B cell (primary cell): ENCODE measurements at regions of chr19 and their contacts with region 1.

Region 1: GRCh38 chr19:9796113-9796773 is 22.6 kb downstream of the FBXL12 start:
- DNase-seq: peak; percentile 92
- ATAC-seq: peak; percentile 18
- H3K4me3 ChIP-seq: no peak overlapping the region
- H3K4me3 Mint-ChIP-seq: peak overlapping the region; percentile 23
- H3K27ac ChIP-seq: peak overlapping the region; percentile 52 to 72
- H3K27ac Mint-ChIP-seq: peak overlapping the region; percentile 79
- H3K4me1 ChIP-seq: peaks cover 0 to 19% of the 10 kb centered on the region in 2 donors
- H3K4me1 Mint-ChIP-seq: peaks cover 12% of the 10 kb centered on the region
- H3K27me3 ChIP-seq: no peaks in the 10 kb centered on the region
- H3K27me3 Mint-ChIP-seq: no peaks in the 10 kb centered on the region
- CTCF ChIP-seq: peak; percentile 79

Region 2: GRCh38 chr19:9140159-9140874 is 655.9 kb before region 1 on chr19 and contains the start of gene ZNF317:
- CTCF ChIA-PET with region 1: interaction called, 4 read pairs
- POLR2A ChIA-PET with region 1: no interaction called
- intact Hi-C with region 1: loop called (anchors 1 kb)
- DNase-seq: peak; percentile 94
- ATAC-seq: peak; percentile 90
- H3K4me3 ChIP-seq: peak within 1 kb of the TSS; percentile 70 to 99 (median 97)
- H3K4me3 Mint-ChIP-seq: peak within 1 kb of the TSS; percentile 98
- H3K27ac ChIP-seq: peak within 1 kb of the TSS; percentile 86 to 90
- H3K27ac Mint-ChIP-seq: peak within 1 kb of the TSS; percentile 97
- H3K4me1 ChIP-seq: peaks cover 13 to 15% of the 10 kb centered on the region in 2 donors
- H3K4me1 Mint-ChIP-seq: peaks cover 33% of the 10 kb centered on the region
- H3K27me3 ChIP-seq: no peaks in the 10 kb centered on the region
- H3K27me3 Mint-ChIP-seq: peaks cover 2% of the 10 kb centered on the region
- CTCF ChIP-seq: no peak
- total RNA-seq, gene ZNF317: 60.6 and 65.2 TPM in 2 replicates

Region 3: GRCh38 chr19:9323919-9324583 is 472.2 kb before region 1 on chr19 and contains the start of gene ZNF559:
- CTCF ChIA-PET with region 1: no interaction called
- POLR2A ChIA-PET with region 1: no interaction called
- intact Hi-C with region 1: loop called (anchors 1 kb)
- DNase-seq: peak; percentile 98
- ATAC-seq: peak; percentile 89
- H3K4me3 ChIP-seq: peak within 1 kb of the TSS; percentile 72 to 88 (median 79)
- H3K4me3 Mint-ChIP-seq: peak within 1 kb of the TSS; percentile 96
- H3K27ac ChIP-seq: peak within 1 kb of the TSS; percentile 78 to 81
- H3K27ac Mint-ChIP-seq: peak within 1 kb of the TSS; percentile 96
- H3K4me1 ChIP-seq: peaks cover 11 to 17% of the 10 kb centered on the region in 2 donors
- H3K4me1 Mint-ChIP-seq: peaks cover 24% of the 10 kb centered on the region
- H3K27me3 ChIP-seq: no peaks in the 10 kb centered on the region
- H3K27me3 Mint-ChIP-seq: no peaks in the 10 kb centered on the region
- CTCF ChIP-seq: peak; percentile 59
- total RNA-seq, gene ZNF559: 49.3 and 60.9 TPM in 2 replicates

Region 4: GRCh38 chr19:9584073-9584833 is 212.0 kb before region 1 on chr19 and contains the start of gene ZNF121:
- CTCF ChIA-PET with region 1: interaction called, 11 read pairs
- POLR2A ChIA-PET with region 1: interaction called, 4 read pairs
- intact Hi-C with region 1: loop called (anchors 1 kb)
- DNase-seq: peak; percentile 90
- ATAC-seq: peak; percentile 84
- H3K4me3 ChIP-seq: peak within 1 kb of the TSS; percentile 77 to 100 (median 92)
- H3K4me3 Mint-ChIP-seq: peak within 1 kb of the TSS; percentile 94
- H3K27ac ChIP-seq: peak within 1 kb of the TSS; percentile 90 to 96
- H3K27ac Mint-ChIP-seq: peak within 1 kb of the TSS; percentile 95
- H3K4me1 ChIP-seq: peaks cover 0 to 27% of the 10 kb centered on the region in 2 donors
- H3K4me1 Mint-ChIP-seq: peaks cover 31% of the 10 kb centered on the region
- H3K27me3 ChIP-seq: peaks cover 0 to under 1% (median 0%) of the 10 kb centered on the region in 4 experiments
- H3K27me3 Mint-ChIP-seq: peaks cover 4% of the 10 kb centered on the region
- CTCF ChIP-seq: no peak
- total RNA-seq, gene ZNF121: 48.0 and 53.5 TPM in 2 replicates

Region 5: GRCh38 chr19:9674663-9675357 is 121.4 kb before region 1 on chr19 and contains the start of gene ZNF562:
- CTCF ChIA-PET with region 1: interaction called, 3 read pairs
- POLR2A ChIA-PET with region 1: interaction called, 12 read pairs
- intact Hi-C with region 1: loop called (anchors 10 kb)
- DNase-seq: peak; percentile 90
- ATAC-seq: peak; percentile 88
- H3K4me3 ChIP-seq: peak within 1 kb of the TSS; percentile 74 to 95 (median 81)
- H3K4me3 Mint-ChIP-seq: peak within 1 kb of the TSS; percentile 100
- H3K27ac ChIP-seq: peak within 1 kb of the TSS; percentile 80 to 89
- H3K27ac Mint-ChIP-seq: peak within 1 kb of the TSS; percentile 99
- H3K4me1 ChIP-seq: peaks cover 3% of the 10 kb centered on the region in 2 donors
- H3K4me1 Mint-ChIP-seq: peaks cover 18% of the 10 kb centered on the region
- H3K27me3 ChIP-seq: no peaks in the 10 kb centered on the region
- H3K27me3 Mint-ChIP-seq: no peaks in the 10 kb centered on the region
- CTCF ChIP-seq: no peak
- total RNA-seq, gene ZNF562: 27.9 and 31.8 TPM in 2 replicates

Region 6: DNA sequence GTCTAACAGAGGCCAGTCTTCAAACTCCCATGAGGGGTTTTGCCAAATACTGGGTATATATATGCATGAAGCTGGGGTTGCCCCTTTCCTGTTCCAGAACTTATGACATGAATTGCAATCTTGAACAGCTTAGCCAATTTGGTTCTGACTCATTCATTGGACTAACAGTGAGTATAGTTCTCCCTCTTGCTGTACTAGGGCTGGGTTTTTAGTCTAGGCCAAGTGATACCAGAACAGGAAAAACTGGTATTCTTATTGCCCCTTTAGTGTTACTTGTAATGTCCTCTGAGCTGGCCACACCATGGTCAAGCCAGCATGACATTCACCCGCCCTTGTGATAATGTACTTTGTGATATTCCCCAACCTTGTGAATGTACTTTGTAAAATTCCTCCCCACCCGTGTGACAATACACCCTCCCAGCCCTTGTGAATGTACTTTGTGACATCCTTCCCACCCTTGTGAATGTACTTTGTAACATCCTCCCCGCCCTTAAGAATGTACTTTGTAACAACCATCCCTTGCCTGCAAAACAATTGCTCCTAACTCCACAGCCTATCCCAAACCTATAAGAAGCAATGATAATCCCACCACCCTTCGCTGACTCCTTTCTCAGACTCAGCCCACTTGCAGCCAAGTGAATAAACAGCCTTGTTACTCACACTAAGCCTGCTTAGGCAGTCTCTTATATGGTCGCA is 54.6 kb before region 1 on chr19:
- CTCF ChIA-PET with region 1: no interaction called
- POLR2A ChIA-PET with region 1: no interaction called
- intact Hi-C with region 1: no loop called
- DNase-seq: no peak
- ATAC-seq: no peak
- H3K4me3 ChIP-seq: no peak overlapping the region
- H3K4me3 Mint-ChIP-seq: no peak overlapping the region
- H3K27ac ChIP-seq: no peak overlapping the region
- H3K27ac Mint-ChIP-seq: no peak overlapping the region
- H3K4me1 ChIP-seq: no peaks in the 10 kb centered on the region
- H3K4me1 Mint-ChIP-seq: no peaks in the 10 kb centered on the region
- H3K27me3 ChIP-seq: no peaks in the 10 kb centered on the region
- H3K27me3 Mint-ChIP-seq: no peaks in the 10 kb centered on the region
- CTCF ChIP-seq: no peak

Region 7: GRCh38 chr19:9785367-9786331 is 10.6 kb before region 1 on chr19:
- CTCF ChIA-PET with region 1: no interaction called
- POLR2A ChIA-PET with region 1: no interaction called
- intact Hi-C with region 1: no loop called
- DNase-seq: peak; percentile 97
- ATAC-seq: peak; percentile 81
- H3K4me3 ChIP-seq: peak overlapping the region; percentile 45 to 94 (median 75)
- H3K4me3 Mint-ChIP-seq: peak overlapping the region; percentile 92
- H3K27ac ChIP-seq: peak overlapping the region; percentile 80 to 97
- H3K27ac Mint-ChIP-seq: peak overlapping the region; percentile 95
- H3K4me1 ChIP-seq: peaks cover 5 to 14% of the 10 kb centered on the region in 2 donors
- H3K4me1 Mint-ChIP-seq: peaks cover 22% of the 10 kb centered on the region
- H3K27me3 ChIP-seq: no peaks in the 10 kb centered on the region
- H3K27me3 Mint-ChIP-seq: no peaks in the 10 kb centered on the region
- CTCF ChIP-seq: no peak

Region 8: GRCh38 chr19:9834726-9835506 is 38.7 kb after region 1 on chr19 and contains the start of gene PIN1:
- CTCF ChIA-PET with region 1: no interaction called
- POLR2A ChIA-PET with region 1: no interaction called
- intact Hi-C with region 1: loop called (anchors 1 kb)
- DNase-seq: peak; percentile 100
- ATAC-seq: peak; percentile 95
- H3K4me3 ChIP-seq: peak within 1 kb of the TSS; percentile 44 to 83 (median 71)
- H3K4me3 Mint-ChIP-seq: peak within 1 kb of the TSS; percentile 97
- H3K27ac ChIP-seq: peak within 1 kb of the TSS; percentile 56 to 69
- H3K27ac Mint-ChIP-seq: peak within 1 kb of the TSS; percentile 96
- H3K4me1 ChIP-seq: peaks cover 7 to 15% of the 10 kb centered on the region in 2 donors
- H3K4me1 Mint-ChIP-seq: peaks cover 16% of the 10 kb centered on the region
- H3K27me3 ChIP-seq: no peaks in the 10 kb centered on the region
- H3K27me3 Mint-ChIP-seq: no peaks in the 10 kb centered on the region
- CTCF ChIP-seq: peak; percentile 57
- total RNA-seq, gene PIN1: 58.5 and 58.9 TPM in 2 replicates

Region 9: DNA sequence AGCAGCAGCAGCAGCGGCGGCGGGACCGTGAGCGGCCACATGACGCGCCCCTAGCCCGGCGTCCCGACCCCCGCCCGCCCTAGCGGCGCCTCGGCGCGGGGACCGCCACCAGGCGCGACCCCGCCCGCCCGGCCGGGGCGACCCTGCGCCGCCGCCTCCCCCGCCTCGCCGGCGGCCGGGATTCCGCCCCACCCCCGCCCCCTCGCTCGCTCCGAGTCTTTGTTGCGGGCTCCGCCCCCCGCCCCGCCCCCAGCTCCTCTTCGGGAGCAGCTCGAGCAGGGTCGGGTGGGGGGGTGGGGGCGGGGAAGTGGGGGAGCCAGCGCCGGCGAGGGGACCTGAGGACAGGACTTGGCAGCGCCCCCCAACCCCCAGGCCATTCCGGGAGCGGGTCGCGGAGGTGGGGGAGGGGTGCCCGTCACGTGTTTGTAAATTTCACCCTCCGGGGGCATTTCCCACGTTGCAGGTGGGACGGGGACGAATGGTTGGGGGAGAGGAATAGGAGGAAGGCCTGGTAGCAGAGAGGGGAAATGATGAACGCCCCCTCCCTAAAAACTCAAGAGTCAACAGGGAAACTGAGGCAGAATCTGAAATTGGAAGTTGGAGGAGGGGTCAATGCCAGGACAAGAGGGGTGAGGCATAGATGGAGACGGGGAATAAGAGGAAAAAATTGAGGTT is 140.2 kb after region 1 on chr19 and contains the start of gene OLFM2:
- CTCF ChIA-PET with region 1: no interaction called
- POLR2A ChIA-PET with region 1: no interaction called
- intact Hi-C with region 1: no loop called
- DNase-seq: no peak
- ATAC-seq: no peak
- H3K4me3 ChIP-seq: peak within 1 kb of the TSS in 1 of 5 experiments; percentile 36
- H3K4me3 Mint-ChIP-seq: peak within 1 kb of the TSS; percentile 79
- H3K27ac ChIP-seq: no peak within 1 kb of the TSS
- H3K27ac Mint-ChIP-seq: peak within 1 kb of the TSS; percentile 67
- H3K4me1 ChIP-seq: peaks cover 22 to 24% of the 10 kb centered on the region in 2 donors
- H3K4me1 Mint-ChIP-seq: peaks cover 22% of the 10 kb centered on the region
- H3K27me3 ChIP-seq: peaks cover 0 to 64% (median 36%) of the 10 kb centered on the region in 4 experiments
- H3K27me3 Mint-ChIP-seq: peaks cover 58% of the 10 kb centered on the region
- CTCF ChIP-seq: no peak
- total RNA-seq, gene OLFM2: not detected in 2 replicates